PC-3 (cell line): ENCODE measurements at regions of chr21 and their contacts with region 1.

Region 1: GRCh38 chr21:35510957-35511695 is 462.0 kb upstream of the RUNX1 start:
- DNase-seq: peak; percentile 89
- ATAC-seq: peak; percentile 87
- H3K4me3 ChIP-seq: peak overlapping the region; percentile 20; the same call in 1 of the 2 replicates
- H3K27ac ChIP-seq: peak overlapping the region; percentile 95
- H3K4me1 ChIP-seq: peaks cover 40% of the 10 kb centered on the region
- H3K27me3 ChIP-seq: no peaks in the 10 kb centered on the region
- CTCF ChIP-seq: no peak

Region 2: DNA sequence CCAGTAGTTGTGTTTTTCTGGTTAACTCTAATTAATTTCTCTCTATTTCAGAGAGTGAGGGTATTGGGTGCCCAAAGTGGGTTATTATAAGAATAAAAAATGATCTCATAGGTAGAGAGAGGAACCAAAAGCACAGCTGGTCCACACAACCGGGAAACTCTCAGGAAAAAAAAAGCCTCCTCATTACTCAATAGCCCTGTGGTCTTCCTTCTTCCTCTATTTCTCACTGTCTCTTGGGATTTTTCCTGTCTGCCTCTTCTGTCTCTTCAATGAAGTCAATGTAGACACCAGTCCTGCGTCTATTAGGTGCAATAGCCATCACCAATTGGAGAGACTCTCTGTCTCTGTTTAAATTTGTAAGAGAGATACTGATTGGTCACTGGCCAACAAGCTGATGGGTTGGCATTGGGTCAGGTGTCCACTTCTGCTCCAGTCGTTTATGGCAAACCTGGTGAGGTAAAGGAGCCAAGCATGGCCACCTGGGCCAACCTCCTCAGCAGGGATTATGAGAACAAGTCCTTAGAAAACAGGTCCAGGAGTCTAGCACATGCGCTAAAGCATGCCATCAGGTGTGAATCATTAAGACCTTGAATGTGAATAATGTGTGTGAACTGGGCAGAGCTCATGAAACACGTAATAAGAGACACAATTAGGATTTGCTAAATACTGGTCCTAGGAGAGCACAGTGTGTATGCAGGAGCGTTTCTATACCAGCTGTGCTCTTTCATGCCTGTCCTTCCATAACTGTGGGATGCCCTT is 19.0 kb before region 1 on chr21:
- CTCF ChIA-PET with region 1: no interaction called
- POLR2A ChIA-PET with region 1: no interaction called
- intact Hi-C with region 1: no loop called
- DNase-seq: no peak
- ATAC-seq: no peak
- H3K4me3 ChIP-seq: no peak overlapping the region
- H3K27ac ChIP-seq: no peak overlapping the region
- H3K4me1 ChIP-seq: peaks cover 6% of the 10 kb centered on the region; the same call in 1 of the 2 replicates
- H3K27me3 ChIP-seq: no peaks in the 10 kb centered on the region
- CTCF ChIP-seq: no peak

Region 3: DNA sequence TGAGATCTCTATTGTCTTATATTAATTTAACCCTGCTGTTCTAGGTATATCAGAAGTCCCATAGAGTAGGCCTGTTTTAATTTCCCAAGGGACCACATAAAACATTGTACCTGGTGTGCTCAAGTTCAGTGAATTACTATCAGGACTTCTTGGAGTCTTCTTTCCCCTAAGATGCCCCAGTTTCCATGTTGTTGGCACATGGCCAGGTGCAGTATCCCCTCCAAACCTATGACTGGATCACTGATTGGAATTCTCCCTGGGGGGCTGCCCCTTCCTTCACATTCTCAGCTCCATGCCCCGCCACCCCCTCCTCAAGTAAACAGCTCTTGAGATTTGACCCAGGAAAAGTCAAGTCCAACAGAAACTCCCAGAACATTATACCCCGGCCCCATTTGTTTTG is 12.6 kb after region 1 on chr21:
- CTCF ChIA-PET with region 1: no interaction called
- POLR2A ChIA-PET with region 1: no interaction called
- intact Hi-C with region 1: loop called (anchors 1 kb)
- DNase-seq: no peak
- ATAC-seq: no peak
- H3K4me3 ChIP-seq: no peak overlapping the region
- H3K27ac ChIP-seq: no peak overlapping the region
- H3K4me1 ChIP-seq: peaks cover 26% of the 10 kb centered on the region
- H3K27me3 ChIP-seq: no peaks in the 10 kb centered on the region
- CTCF ChIP-seq: no peak

Region 4: DNA sequence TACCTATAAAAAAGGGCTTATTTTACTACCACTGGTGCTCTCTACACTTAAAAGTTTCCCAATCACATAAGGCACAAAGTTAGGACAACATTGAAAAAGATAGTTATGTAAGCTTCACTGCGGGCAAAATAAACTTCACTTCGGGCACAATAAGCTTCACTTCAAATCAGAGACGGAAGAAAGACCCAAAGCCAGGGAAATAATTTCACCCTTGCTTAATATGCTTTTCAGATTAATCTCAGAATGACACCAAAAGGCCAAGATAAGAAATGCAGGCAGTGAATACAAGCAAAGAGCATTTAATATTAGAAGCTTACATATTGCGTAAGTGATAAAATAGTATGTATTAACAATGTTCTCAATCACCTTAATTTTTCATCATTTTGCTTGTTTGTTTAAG is 105.0 kb after region 1 on chr21:
- CTCF ChIA-PET with region 1: interaction called, 3 read pairs
- POLR2A ChIA-PET with region 1: no interaction called
- intact Hi-C with region 1: loop called (anchors 5 kb)
- DNase-seq: peak; percentile 49
- ATAC-seq: no peak; the same call in 1 of the 2 replicates
- H3K4me3 ChIP-seq: no peak overlapping the region
- H3K27ac ChIP-seq: no peak overlapping the region
- H3K4me1 ChIP-seq: peaks cover 22% of the 10 kb centered on the region
- H3K27me3 ChIP-seq: no peaks in the 10 kb centered on the region
- CTCF ChIP-seq: peak; percentile 72

Region 5: DNA sequence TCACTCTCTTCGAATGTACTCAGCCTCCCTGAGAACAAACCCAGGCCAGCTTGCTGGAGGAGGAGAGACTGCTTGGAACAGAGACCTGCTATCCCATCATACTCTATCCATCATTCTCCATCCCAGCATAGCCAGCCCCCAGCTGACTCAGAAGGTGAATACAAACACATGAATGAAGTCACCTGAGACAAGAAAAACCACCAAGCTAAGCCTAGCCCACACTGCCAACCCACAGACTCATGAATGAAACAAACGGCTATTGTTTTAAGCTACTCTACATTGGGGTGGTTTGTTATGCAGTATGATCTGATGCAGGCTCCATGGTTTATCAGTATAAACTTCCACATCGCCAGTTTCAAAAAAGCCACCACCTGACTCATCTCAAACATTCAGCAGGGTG is 153.6 kb after region 1 on chr21:
- CTCF ChIA-PET with region 1: no interaction called
- POLR2A ChIA-PET with region 1: no interaction called
- intact Hi-C with region 1: loop called (anchors 1 kb)
- DNase-seq: peak; percentile 94
- ATAC-seq: peak; percentile 98
- H3K4me3 ChIP-seq: no peak overlapping the region
- H3K27ac ChIP-seq: peak overlapping the region; percentile 82
- H3K4me1 ChIP-seq: peaks cover 28% of the 10 kb centered on the region
- H3K27me3 ChIP-seq: no peaks in the 10 kb centered on the region
- CTCF ChIP-seq: no peak